Gastrocnemius medialis (tissue), 4 donors: ENCODE measurements at regions of chr2 and their contacts with region 1.

Region 1: DNA sequence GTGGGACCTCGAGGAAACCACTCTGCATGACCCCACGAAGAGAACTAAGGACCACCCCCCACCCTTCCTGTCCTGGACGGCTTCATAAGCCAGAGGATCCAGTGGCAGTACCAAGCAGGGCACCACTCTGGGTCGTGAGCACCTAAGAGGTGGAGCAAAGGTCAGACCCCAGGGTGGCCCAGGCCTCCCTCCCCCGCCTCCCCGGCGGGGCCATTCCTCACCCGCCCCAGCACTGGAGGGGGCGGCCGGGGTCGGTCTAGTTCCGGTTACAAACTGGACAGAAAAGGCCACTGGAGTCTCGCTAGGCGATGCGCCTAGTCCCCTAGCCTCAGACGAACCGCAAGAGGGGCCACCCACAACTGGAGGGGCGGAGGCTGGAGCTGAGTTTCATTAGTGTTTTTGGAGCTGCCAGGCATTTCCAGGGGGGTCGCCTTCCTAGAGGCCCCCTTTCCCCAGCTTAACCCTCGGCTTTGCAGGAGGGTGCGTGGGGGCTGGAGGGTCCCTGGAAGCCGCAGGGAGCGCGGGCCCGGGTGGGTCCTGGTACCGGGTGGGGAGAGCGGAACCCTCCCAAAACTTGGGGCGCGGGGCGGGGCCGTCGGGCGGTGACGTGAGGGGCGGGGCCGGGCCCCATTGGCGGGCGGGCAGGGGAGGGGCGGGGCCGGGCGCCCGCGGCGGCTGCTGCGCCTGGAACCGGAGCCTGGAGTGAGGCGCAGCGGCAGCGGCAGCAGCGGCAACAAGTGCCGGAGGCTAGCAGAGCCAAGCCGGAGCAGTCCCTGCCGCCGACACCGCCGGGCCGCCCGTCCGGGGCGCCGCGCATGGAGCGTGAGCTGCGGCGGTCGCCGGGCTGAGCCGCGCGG is at the start of gene B3GNT2:
- DNase-seq: peak; percentile 54 to 56
- ATAC-seq: peak; percentile 80 to 88
- H3K4me3 ChIP-seq: peak within 1 kb of the TSS; percentile 89 to 100 (median 96)
- H3K27ac ChIP-seq: peak within 1 kb of the TSS; percentile 87 to 88 (median 88)
- H3K4me1 ChIP-seq: peaks cover 16 to 20% of the 10 kb centered on the region in 2 donors
- H3K27me3 ChIP-seq: no peaks in the 10 kb centered on the region
- CTCF ChIP-seq: no peak
- POLR2A ChIP-seq: peak; percentile 79 to 88
- total RNA-seq, gene B3GNT2: 3.6 to 4.8 (median 4.0) TPM

Region 2: DNA sequence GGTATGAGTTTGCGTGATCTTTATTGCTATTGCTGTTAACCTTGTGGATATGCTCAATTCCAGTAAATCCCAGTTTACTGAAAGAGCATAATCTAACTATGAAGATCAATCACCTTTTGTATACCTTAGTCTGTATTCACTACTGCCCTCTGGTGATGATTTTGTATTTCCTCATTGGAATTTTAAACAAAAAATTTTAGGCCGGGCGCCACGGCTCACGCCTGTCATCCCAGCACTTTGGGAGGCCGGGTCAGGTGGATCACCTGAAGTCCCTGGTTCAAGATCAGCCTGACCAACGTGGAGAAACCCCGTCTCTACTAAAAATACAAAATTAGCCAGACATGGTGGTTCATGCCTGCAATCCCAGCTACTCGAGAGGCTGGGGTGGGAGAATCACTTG is 285.0 kb before region 1 on chr2:
- in situ Hi-C with region 1: no loop called
- intact Hi-C with region 1: loop called (anchors 10 kb)
- DNase-seq: no peak
- ATAC-seq: no peak
- H3K4me3 ChIP-seq: no peak overlapping the region
- H3K27ac ChIP-seq: no peak overlapping the region
- H3K4me1 ChIP-seq: peaks cover 16 to 22% of the 10 kb centered on the region in 2 donors
- H3K27me3 ChIP-seq: no peaks in the 10 kb centered on the region
- CTCF ChIP-seq: no peak
- POLR2A ChIP-seq: no peak

Region 3: DNA sequence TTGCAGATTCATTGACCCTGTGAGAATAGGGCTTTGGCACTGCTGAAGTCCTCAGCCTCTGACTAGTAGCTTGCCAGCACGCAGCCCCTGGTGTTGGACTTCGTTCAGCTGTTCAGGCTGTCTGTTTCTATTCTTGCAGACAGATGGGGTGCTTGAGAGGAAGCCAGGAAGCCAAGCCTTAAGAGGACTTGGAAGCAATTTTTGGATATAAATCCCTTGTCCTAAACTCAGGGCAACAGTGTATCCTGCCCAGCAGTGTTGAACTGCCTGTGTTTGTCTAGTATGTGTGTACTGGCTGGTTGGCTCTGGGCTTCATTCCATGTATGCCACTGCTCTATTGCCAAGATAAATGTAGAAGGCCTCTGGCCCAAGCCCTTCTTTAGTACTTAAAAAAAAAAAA is 181.5 kb before region 1 on chr2:
- in situ Hi-C with region 1: no loop called
- intact Hi-C with region 1: loop called (anchors 10 kb)
- DNase-seq: peak; percentile 7 to 24
- ATAC-seq: peak; percentile 49 to 75
- H3K4me3 ChIP-seq: no peak overlapping the region
- H3K27ac ChIP-seq: peak overlapping the region in 2 of 4 donors; percentile 37 to 48
- H3K4me1 ChIP-seq: peaks cover 5 to 9% of the 10 kb centered on the region in 2 donors
- H3K27me3 ChIP-seq: no peaks in the 10 kb centered on the region
- CTCF ChIP-seq: peak in 1 of 5 experiments; percentile 17
- POLR2A ChIP-seq: no peak

Region 4: GRCh38 chr2:62306751-62307468 is 111.3 kb after region 1 on chr2:
- in situ Hi-C with region 1: no loop called
- intact Hi-C with region 1: loop called (anchors 10 kb)
- DNase-seq: no peak
- ATAC-seq: peak in 1 of 2 donors; percentile 41
- H3K4me3 ChIP-seq: no peak overlapping the region
- H3K27ac ChIP-seq: peak overlapping the region in 3 of 4 donors; percentile 41 to 54 (median 41)
- H3K4me1 ChIP-seq: peaks cover 0 to 9% of the 10 kb centered on the region in 2 donors
- H3K27me3 ChIP-seq: no peaks in the 10 kb centered on the region
- CTCF ChIP-seq: no peak
- POLR2A ChIP-seq: no peak

Region 5: GRCh38 chr2:62415019-62415431 is 219.4 kb after region 1 on chr2:
- in situ Hi-C with region 1: loop called in 1 of 4 experiments (anchors 10 kb)
- intact Hi-C with region 1: loop called (anchors 5 kb)
- DNase-seq: no peak
- ATAC-seq: no peak
- H3K4me3 ChIP-seq: no peak overlapping the region
- H3K27ac ChIP-seq: no peak overlapping the region
- H3K4me1 ChIP-seq: peaks cover 15 to 16% of the 10 kb centered on the region in 2 donors
- H3K27me3 ChIP-seq: no peaks in the 10 kb centered on the region
- CTCF ChIP-seq: no peak
- POLR2A ChIP-seq: no peak